ENCODE measurements at regions of chr4 and their contacts with region 1.

Region 1: DNA sequence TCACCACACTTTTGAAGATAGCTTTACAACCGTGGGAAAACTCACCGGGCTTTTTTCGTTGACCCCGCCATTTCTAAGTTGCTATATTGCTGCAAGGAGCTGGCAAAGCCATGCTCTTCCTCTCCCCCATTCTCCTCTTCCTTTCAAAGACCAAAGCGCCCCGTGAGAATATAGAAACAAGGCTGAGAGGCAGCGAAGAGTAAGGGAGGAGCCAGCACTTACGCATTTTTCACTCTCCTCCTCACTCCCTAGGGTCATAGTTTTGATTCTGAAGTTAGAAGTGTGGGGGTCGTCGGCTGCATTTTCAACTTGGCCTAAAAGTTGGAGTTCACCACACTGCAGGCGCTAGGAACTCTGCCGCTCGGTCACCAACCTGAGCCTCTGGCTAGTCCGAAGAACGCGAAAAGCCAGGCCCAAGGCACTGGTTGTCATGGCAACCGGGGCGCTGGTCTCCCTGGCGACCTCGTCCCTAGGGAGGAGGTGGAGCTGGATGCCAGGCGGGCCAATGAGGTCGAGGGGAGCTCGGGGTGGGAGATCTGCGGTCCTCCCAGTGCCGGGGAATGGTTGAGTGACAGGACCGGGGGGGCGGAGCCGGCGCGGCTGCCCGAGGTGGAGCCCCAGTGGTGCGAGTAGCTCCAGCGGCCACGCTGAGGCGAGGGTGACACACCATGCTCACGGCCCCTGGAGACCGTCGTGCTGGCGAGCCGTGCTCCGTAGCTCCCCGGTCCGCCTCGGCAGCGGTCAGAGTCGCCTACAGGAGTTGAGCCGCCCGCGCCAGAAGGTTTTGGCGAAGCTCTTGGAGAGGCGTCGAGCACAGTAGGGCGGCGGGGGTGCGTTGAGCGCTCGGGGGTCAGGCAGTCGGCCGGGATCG is at the start of gene PTPN13:
- DNase-seq: peak; percentile 99
- H3K4me3 ChIP-seq: peak within 1 kb of the TSS; percentile 57 to 81 (median 74)
- H3K27ac ChIP-seq: peak within 1 kb of the TSS; percentile 77 to 90 (median 89)
- H3K4me1 ChIP-seq: peaks cover 0 to 37% (median 12%) of the 10 kb centered on the region in 4 donors
- H3K27me3 ChIP-seq: no peaks in the 10 kb centered on the region
- CTCF ChIP-seq: no peak
- EP300 ChIP-seq: no peak
- POLR2A ChIP-seq: peak; percentile 28 to 61
- total RNA-seq, gene PTPN13: 9.9 to 16.1 (median 12.5) TPM

Region 2: DNA sequence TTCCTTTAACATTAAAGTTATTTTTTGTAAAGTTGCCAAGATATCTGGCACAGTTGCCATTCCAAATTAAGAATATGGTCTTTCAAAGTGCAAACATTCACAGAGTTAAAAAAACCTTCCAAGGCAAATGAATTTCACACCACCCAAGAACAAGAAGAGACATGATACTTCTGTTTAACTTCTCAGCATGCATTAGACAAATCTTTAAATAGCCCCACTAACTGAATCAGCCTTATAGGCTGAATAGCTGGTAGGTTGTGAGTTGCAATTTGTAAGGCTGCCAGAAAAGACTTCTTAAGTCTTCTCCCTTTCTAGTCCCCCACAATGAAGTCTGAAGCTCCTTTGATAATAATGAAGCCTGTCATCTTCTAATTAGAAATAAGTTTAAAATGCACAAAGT is 329.7 kb before region 1 on chr4:
- intact Hi-C with region 1: no loop called
- DNase-seq: no peak
- H3K4me3 ChIP-seq: no peak overlapping the region
- H3K27ac ChIP-seq: no peak overlapping the region
- H3K4me1 ChIP-seq: no peaks in the 10 kb centered on the region
- H3K27me3 ChIP-seq: no peaks in the 10 kb centered on the region
- CTCF ChIP-seq: no peak
- EP300 ChIP-seq: no peak
- POLR2A ChIP-seq: no peak

Region 3: GRCh38 chr4:86895692-86896488 is 302.0 kb after region 1 on chr4:
- intact Hi-C with region 1: loop called (anchors 5 kb)
- DNase-seq: no peak
- H3K4me3 ChIP-seq: no peak overlapping the region
- H3K27ac ChIP-seq: no peak overlapping the region
- H3K4me1 ChIP-seq: peaks cover 0 to 15% (median 7%) of the 10 kb centered on the region in 4 donors
- H3K27me3 ChIP-seq: no peaks in the 10 kb centered on the region
- CTCF ChIP-seq: peak; percentile 36 to 69 (median 62)
- EP300 ChIP-seq: no peak
- POLR2A ChIP-seq: no peak

Region 4: DNA sequence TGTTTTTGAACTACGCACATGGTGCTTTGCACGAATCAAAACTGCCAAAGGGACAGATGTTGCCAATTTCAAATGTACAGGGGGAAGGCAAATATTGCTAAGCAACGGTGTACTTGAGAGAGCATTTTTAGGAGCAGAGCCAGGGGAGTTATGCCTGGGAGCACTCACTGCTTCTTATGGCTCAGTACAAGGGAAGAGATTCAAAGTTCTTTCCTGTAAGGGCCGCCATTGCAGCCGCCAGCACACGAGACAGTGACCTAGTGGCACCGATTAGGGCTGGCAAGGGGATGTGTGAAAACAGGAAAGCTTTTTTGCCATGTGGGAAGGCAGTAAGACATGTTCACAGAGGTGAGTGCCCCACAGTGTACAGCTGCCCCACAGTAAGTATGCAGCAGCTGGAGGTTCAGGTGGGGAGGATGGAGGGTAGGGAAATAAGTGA is 474.7 kb after region 1 on chr4:
- intact Hi-C with region 1: loop called (anchors 5 kb)
- DNase-seq: no peak
- H3K4me3 ChIP-seq: peak overlapping the region in 1 of 4 donors; percentile 1
- H3K27ac ChIP-seq: peak overlapping the region; percentile 63 to 87 (median 76)
- H3K4me1 ChIP-seq: peaks cover 0 to 75% (median 69%) of the 10 kb centered on the region in 4 donors
- H3K27me3 ChIP-seq: no peaks in the 10 kb centered on the region
- CTCF ChIP-seq: no peak
- EP300 ChIP-seq: no peak
- POLR2A ChIP-seq: no peak

Region 5: GRCh38 chr4:87078987-87079486 is 485.1 kb after region 1 on chr4:
- intact Hi-C with region 1: no loop called
- DNase-seq: peak; percentile 81
- H3K4me3 ChIP-seq: peak overlapping the region in 1 of 4 donors; percentile 10
- H3K27ac ChIP-seq: peak overlapping the region; percentile 77 to 87 (median 85)
- H3K4me1 ChIP-seq: peaks cover 0 to 100% (median 90%) of the 10 kb centered on the region in 4 donors
- H3K27me3 ChIP-seq: no peaks in the 10 kb centered on the region
- CTCF ChIP-seq: no peak
- EP300 ChIP-seq: no peak
- POLR2A ChIP-seq: no peak

Region 6: DNA sequence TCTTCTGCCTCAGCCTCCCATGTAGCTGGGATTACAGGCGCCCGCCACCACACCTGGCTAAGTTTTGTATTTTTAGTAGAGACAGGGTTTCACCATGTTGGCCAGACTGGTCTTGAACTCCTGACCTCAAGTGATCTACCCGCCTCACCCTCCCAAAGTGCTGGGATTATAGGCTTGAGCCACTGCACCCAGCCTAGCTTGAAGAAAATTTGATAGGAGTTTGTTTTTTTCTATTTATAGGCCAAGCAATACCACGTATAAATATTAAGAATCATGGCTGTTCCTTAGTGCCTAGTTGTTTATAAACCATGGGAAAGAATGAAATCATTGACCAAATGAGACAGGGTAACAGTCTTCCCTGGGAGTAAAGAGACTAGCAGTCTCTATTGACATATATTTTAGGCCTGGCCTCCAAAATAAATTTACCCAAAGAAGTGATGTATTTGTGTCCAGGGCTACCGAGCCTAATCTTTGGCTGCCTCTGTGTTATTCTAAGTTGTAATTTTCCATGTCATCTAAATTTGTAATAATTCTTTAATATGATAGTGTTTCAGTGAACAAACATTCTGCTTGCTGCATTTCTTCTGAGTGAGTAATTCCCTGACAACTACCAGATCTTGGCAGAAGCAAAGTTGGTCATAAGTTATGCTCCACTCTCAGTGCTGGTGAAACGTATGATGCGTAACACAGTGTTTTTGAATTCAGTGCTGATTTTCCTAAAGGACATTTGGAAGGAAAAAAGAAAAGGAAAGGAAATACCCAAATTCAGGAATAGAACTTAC is 1423.8 kb after region 1 on chr4:
- intact Hi-C with region 1: loop called (anchors 10 kb)
- DNase-seq: peak; percentile 71
- H3K4me3 ChIP-seq: no peak overlapping the region
- H3K27ac ChIP-seq: peak overlapping the region; percentile 93 to 97 (median 94)
- H3K4me1 ChIP-seq: peaks cover 3 to 94% (median 90%) of the 10 kb centered on the region in 4 donors
- H3K27me3 ChIP-seq: no peaks in the 10 kb centered on the region
- CTCF ChIP-seq: no peak
- EP300 ChIP-seq: peak; percentile 79 to 89 (median 83)
- POLR2A ChIP-seq: no peak